PC-9 (cell line): ENCODE measurements at regions of chr9 and their contacts with region 1.

Region 1: DNA sequence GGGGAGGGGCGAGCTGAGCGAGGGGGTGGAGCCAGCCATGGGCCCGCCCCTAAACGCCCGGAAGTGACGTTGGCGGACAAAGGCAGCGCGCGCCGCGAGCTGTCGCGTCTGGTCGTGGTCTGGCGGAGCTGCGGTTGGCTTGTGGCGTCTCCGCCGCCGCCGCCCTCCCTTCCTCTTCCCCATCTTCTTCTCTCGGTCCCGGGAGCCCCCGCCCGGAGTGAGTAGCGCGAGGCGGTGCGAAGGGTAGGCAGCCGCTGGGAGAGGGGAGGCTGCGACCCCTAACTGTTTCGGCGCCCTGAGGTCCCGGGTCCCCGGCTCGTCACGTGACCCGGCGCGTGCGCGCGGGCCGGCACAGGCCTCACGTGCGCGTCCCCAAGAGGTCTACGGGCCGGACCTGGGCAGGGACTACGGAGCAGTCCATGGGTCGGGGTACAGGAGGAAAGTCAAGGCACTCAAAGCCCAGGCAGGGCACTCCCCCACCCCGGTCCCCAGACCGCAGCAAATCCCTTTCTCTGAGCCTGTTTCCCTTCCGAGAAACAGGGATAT is at the start of gene NTMT1:
- DNase-seq: peak; percentile 53 to 85
- H3K4me3 ChIP-seq: peak within 1 kb of the TSS; percentile 99
- H3K27ac ChIP-seq: peak within 1 kb of the TSS; percentile 33; the same call in 1 of the 2 replicates
- H3K4me1 ChIP-seq: peaks cover 32% of the 10 kb centered on the region
- H3K27me3 ChIP-seq: no peaks in the 10 kb centered on the region
- CTCF ChIP-seq: no peak
- total RNA-seq, gene NTMT1: 52.5 and 53.1 TPM in 2 replicates

Region 2: GRCh38 chr9:128845155-128845931 is 780.8 kb before region 1 on chr9:
- CTCF ChIA-PET with region 1: interaction called, 13 read pairs
- POLR2A ChIA-PET with region 1: no interaction called
- intact Hi-C with region 1: no loop called
- DNase-seq: no peak
- H3K4me3 ChIP-seq: no peak overlapping the region
- H3K27ac ChIP-seq: no peak overlapping the region
- H3K4me1 ChIP-seq: no peaks in the 10 kb centered on the region
- H3K27me3 ChIP-seq: no peaks in the 10 kb centered on the region
- CTCF ChIP-seq: no peak

Region 3: DNA sequence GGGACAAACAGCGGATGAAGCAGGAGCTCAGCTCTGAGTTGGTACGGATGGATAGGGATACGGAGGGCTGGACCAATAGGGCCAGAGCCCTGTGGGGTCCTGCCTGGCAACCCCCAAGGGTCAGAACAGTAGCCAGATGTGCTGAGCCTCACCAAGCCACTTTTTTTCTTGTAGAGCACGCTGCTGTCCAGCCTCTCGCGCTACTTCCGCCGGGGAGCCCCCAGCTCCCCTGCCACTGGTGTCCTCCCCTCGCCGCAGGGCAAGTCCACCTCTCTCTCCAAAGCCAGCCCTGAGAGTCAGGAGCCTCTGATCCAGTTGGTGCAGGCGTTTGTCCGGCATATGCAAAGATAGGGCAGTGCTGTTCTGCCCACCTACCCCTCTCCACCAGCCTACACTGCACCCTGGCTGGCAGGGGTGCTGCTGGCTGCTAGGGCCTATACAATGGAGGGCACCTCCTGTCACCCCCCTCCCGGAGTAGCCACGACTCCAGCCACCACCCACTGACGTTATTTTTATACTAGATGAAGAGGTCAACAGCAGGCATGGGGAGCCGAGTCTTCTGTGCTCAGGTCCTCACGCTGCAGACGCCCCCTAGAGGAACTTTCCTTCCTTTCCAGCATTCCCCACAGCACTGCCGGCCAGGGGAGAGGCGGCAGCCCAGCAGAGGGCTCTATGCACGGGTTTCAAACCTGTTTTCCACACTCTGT is 619.7 kb before region 1 on chr9:
- CTCF ChIA-PET with region 1: interaction called, 13 read pairs
- POLR2A ChIA-PET with region 1: no interaction called
- intact Hi-C with region 1: no loop called
- DNase-seq: peak; percentile 58 to 77
- H3K4me3 ChIP-seq: no peak overlapping the region
- H3K27ac ChIP-seq: no peak overlapping the region
- H3K4me1 ChIP-seq: no peaks in the 10 kb centered on the region
- H3K27me3 ChIP-seq: no peaks in the 10 kb centered on the region
- CTCF ChIP-seq: peak; percentile 85

Region 4: DNA sequence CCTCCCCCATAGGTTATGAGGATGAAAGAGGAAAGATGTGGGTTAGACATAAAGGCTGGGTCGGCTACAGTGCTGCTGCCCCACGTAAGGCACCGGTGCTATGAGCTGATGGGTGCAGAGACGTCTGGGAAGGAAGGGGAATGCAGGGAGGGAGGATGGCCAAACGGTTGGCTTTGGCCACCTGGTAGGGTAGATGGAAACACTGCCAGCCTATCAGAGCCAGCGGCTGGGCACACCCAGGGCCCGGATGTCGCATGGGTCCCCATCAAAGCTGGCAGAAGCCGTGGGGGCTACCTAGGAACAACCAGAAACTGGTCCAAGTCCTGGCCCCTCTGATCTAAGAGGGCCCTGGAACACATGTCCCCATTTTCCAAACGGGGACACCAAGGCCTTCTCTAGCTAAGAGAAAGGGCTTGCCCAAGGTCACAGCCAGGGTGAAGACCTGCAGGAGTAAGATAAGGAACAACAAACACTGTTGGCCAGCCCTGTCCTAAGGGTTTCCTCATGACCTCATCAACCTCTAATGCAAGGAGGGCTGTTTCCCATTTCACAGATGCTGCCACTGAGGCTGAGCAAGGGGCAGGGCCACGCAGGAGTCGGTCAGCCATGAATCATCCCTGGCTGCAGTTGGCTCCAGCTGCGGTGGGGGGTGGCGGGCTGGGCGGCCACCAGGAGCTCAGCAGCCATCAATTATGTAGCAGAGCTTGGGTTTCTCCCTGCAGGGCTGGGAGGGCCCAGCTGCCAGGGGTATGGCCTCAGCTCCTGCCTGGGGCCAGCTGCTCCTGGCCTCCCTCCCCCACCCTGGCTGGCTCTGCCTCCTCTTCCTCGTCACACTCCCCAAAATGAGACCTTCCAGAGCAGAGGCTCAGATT is 602.9 kb before region 1 on chr9:
- CTCF ChIA-PET with region 1: interaction called, 11 read pairs
- POLR2A ChIA-PET with region 1: no interaction called
- intact Hi-C with region 1: no loop called
- DNase-seq: peak; percentile 85 to 92
- H3K4me3 ChIP-seq: no peak overlapping the region
- H3K27ac ChIP-seq: peak overlapping the region; percentile 51
- H3K4me1 ChIP-seq: peaks cover 51% of the 10 kb centered on the region
- H3K27me3 ChIP-seq: no peaks in the 10 kb centered on the region
- CTCF ChIP-seq: no peak

Region 5: DNA sequence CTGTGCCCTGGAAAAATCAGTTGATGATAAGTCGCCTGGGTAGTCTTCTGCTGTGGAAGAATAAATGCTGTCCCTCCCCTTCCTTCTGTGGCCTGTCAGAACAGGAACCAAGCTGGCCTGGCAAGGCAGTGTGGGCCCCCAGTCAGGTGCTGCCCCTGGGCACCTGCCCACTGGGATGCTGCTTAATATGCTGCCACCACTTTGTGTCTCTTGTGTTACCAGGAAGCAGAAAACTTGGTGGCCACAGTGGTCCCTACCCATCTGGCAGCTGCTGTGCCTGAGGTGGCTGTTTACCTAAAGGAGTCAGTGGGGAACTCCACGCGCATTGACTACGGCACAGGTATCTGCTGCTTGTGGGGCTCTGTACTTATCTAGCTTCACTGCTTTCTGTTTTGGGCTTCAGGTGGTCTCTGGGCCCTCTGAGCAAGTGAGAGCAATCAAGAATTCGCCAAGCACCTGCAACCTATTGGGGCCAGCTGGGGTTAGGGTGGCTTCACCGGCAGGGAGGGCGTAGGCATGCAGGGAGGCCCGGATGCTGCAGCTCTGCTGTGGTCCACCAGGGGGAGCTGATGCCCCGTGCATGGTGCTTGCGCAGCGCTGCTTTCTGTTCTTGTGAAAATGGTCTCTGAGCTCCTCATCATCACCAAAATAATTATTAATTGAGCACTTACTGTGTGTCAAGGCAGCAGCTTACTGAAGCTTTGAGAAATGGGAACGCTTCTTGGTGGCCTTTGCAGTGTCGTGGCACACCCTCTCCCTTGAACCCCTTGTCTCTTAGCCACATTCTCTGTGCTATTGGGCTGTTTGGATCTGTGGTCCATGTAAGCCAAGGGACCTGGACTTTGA is 494.6 kb before region 1 on chr9:
- CTCF ChIA-PET with region 1: interaction called, 12 read pairs
- POLR2A ChIA-PET with region 1: no interaction called
- intact Hi-C with region 1: no loop called
- DNase-seq: peak in 1 of 2 experiments; percentile 81
- H3K4me3 ChIP-seq: no peak overlapping the region
- H3K27ac ChIP-seq: no peak overlapping the region
- H3K4me1 ChIP-seq: no peaks in the 10 kb centered on the region
- H3K27me3 ChIP-seq: no peaks in the 10 kb centered on the region
- CTCF ChIP-seq: peak; percentile 97

Region 6: GRCh38 chr9:129139993-129140396 is 486.2 kb before region 1 on chr9:
- CTCF ChIA-PET with region 1: interaction called, 10 read pairs
- POLR2A ChIA-PET with region 1: interaction called, 3 read pairs
- intact Hi-C with region 1: loop called (anchors 1 kb)
- DNase-seq: peak; percentile 85 to 95
- H3K4me3 ChIP-seq: peak overlapping the region; percentile 91
- H3K27ac ChIP-seq: peak overlapping the region; percentile 100
- H3K4me1 ChIP-seq: peaks cover 43% of the 10 kb centered on the region
- H3K27me3 ChIP-seq: no peaks in the 10 kb centered on the region
- CTCF ChIP-seq: no peak

Region 7: GRCh38 chr9:129460323-129461261 is 165.6 kb before region 1 on chr9:
- CTCF ChIA-PET with region 1: interaction called, 4 read pairs
- POLR2A ChIA-PET with region 1: interaction called, 12 read pairs
- intact Hi-C with region 1: no loop called
- DNase-seq: peak; percentile 85 to 94
- H3K4me3 ChIP-seq: peak overlapping the region; percentile 64
- H3K27ac ChIP-seq: peak overlapping the region; percentile 89
- H3K4me1 ChIP-seq: peaks cover 47% of the 10 kb centered on the region
- H3K27me3 ChIP-seq: no peaks in the 10 kb centered on the region
- CTCF ChIP-seq: no peak